Dorsolateral prefrontal cortex (tissue), 120 donors: ENCODE measurements at regions of chr9 and their contacts with region 1.

Region 1: GRCh38 chr9:78261403-78262001 is 25.6 kb downstream of the CEP78 start:
- DNase-seq: no peak
- H3K4me3 ChIP-seq: no peak overlapping the region
- H3K27ac ChIP-seq: no peak overlapping the region
- H3K27me3 ChIP-seq: no peaks in the 10 kb centered on the region
- CTCF ChIP-seq: peak; percentile 65 to 91 (median 82)

Region 2: DNA sequence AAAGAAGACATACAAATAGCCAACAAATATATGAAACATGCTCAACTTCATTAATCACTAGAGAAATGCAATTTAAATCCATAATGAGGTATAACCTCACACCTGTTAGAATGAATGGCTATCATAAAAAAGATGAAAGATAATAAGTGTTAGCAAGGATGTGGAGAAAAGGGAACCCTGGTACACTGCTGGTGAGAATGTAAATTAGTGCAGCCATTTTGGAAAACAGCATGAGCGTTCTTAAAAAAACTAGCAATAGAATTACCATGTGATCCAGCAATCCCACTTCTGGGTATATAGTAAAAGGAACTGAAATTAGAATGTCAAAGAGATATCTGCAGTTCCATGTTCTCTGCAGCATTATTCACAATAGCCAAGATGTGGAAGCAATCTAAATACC is 89.9 kb before region 1 on chr9:
- intact Hi-C with region 1: no loop called
- DNase-seq: no peak
- H3K4me3 ChIP-seq: no peak overlapping the region
- H3K27ac ChIP-seq: no peak overlapping the region
- H3K27me3 ChIP-seq: no peaks in the 10 kb centered on the region
- CTCF ChIP-seq: no peak

Region 3: DNA sequence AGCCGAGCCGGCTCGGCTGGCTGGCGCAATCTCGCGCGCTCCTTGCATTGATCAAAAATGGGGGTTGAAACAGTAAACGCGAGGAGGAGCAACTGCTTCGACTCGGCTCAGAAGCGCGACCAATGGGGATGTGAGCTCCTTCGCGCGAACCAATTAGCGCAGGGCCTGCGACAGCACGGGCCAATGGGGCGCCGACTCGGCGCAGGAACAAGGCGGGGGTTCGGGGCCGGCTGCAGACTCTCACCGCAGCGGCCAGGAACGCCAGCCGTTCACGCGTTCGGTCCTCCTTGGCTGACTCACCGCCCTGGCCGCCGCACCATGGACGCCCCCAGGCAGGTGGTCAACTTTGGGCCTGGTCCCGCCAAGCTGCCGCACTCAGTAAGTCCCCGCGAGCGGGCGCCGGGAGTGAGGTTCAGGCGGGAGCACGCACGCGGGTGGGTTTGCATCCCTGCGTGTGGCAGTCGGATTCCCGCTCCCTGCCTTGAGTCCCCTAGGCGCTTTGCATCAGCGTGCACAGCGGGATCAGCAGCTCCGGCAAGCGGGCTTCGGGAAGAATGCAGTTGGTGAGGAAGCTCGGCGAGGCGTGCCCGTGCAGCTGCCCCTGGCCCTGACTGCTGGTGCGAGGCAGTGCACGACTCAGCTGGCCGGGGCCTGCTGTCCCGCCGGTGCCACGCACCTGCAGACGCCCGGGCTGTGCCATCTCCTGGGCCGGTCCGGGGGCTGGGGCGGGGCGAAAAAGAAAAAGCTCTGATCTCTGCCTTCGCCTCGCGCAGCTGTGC is 35.6 kb after region 1 on chr9 and contains the start of gene PSAT1:
- intact Hi-C with region 1: loop called in 1 of 2 experiments (anchors 5 kb)
- DNase-seq: peak; percentile 76 to 97 (median 92)
- H3K4me3 ChIP-seq: peak within 1 kb of the TSS; percentile 57 to 96 (median 84)
- H3K27ac ChIP-seq: peak within 1 kb of the TSS; percentile 65 to 99 (median 94)
- H3K27me3 ChIP-seq: no peaks in the 10 kb centered on the region
- CTCF ChIP-seq: peak in 48 of 56 donors; percentile 12 to 66 (median 34)
- total RNA-seq, gene PSAT1: 61.4 to 222 (median 91.8) TPM